ENCODE measurements at regions of chr12 and their contacts with region 1.

Region 1: GRCh38 chr12:31562594-31563328 is 28.2 kb downstream of the DENND5B start:
- DNase-seq: no peak
- ATAC-seq: no peak
- H3K4me3 ChIP-seq: no peak overlapping the region
- H3K27ac ChIP-seq: no peak overlapping the region
- H3K4me1 ChIP-seq: peaks cover 0 to 24% (median 0%) of the 10 kb centered on the region in 9 donors
- H3K27me3 ChIP-seq: no peaks in the 10 kb centered on the region
- CTCF ChIP-seq: no peak

Region 2: GRCh38 chr12:31506515-31507306 is 56.0 kb before region 1 on chr12:
- intact Hi-C with region 1: loop called in 1 of 10 experiments (anchors 10 kb)
- DNase-seq: no peak
- ATAC-seq: peak in 1 of 8 donors; percentile 20
- H3K4me3 ChIP-seq: no peak overlapping the region
- H3K27ac ChIP-seq: no peak overlapping the region
- H3K4me1 ChIP-seq: peaks cover 0 to 37% (median 24%) of the 10 kb centered on the region in 9 donors
- H3K27me3 ChIP-seq: no peaks in the 10 kb centered on the region
- CTCF ChIP-seq: no peak

Region 3: DNA sequence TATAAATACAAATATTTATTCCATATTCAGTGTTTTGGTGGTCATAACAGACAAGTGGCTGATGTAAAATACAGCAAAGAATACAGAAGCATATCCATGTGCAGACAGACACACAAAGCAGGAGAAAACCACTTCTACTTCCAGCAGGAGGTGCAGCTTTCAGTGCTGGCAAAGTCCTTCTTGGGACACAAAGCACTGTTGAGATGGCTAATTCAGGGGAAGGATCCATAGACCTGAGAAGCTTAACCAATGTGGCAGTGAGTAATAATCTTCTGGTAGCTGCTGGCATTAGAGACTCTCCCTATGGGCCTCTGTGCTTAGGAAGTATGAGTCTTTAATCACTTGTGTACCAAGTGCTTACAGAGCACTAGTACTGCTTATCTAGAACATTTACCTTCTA is 139.3 kb after region 1 on chr12:
- intact Hi-C with region 1: no loop called
- DNase-seq: no peak
- ATAC-seq: no peak
- H3K4me3 ChIP-seq: no peak overlapping the region
- H3K27ac ChIP-seq: no peak overlapping the region
- H3K4me1 ChIP-seq: no peaks in the 10 kb centered on the region
- H3K27me3 ChIP-seq: no peaks in the 10 kb centered on the region
- CTCF ChIP-seq: peak in 4 of 9 donors; percentile 10 to 49 (median 33)

Region 4: DNA sequence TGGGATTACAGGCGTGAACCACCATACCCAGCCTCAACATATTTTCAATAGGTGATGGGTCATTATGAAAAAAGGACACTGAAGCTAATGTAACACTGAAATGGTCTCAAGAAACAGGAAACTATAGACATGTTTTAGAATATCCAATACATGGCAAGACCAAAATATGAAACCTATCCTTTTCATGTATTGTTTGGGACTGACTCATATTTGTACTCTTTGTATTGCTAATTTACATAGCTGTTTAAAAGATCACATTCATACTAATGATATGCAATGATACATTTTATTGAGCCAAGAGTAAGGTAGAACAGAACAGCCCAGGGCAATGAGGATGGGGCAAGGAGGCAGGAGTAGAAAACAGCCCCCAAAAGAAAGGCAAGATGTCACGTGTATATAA is 429.1 kb after region 1 on chr12:
- intact Hi-C with region 1: no loop called
- DNase-seq: no peak
- ATAC-seq: no peak
- H3K4me3 ChIP-seq: no peak overlapping the region
- H3K27ac ChIP-seq: no peak overlapping the region
- H3K4me1 ChIP-seq: peaks cover 0 to 12% (median 0%) of the 10 kb centered on the region in 9 donors
- H3K27me3 ChIP-seq: no peaks in the 10 kb centered on the region
- CTCF ChIP-seq: no peak

Measured in heart right ventricle (tissue), 16 donors.